ENCODE measurements at regions of chr6 and their contacts with region 1.

Region 1: DNA sequence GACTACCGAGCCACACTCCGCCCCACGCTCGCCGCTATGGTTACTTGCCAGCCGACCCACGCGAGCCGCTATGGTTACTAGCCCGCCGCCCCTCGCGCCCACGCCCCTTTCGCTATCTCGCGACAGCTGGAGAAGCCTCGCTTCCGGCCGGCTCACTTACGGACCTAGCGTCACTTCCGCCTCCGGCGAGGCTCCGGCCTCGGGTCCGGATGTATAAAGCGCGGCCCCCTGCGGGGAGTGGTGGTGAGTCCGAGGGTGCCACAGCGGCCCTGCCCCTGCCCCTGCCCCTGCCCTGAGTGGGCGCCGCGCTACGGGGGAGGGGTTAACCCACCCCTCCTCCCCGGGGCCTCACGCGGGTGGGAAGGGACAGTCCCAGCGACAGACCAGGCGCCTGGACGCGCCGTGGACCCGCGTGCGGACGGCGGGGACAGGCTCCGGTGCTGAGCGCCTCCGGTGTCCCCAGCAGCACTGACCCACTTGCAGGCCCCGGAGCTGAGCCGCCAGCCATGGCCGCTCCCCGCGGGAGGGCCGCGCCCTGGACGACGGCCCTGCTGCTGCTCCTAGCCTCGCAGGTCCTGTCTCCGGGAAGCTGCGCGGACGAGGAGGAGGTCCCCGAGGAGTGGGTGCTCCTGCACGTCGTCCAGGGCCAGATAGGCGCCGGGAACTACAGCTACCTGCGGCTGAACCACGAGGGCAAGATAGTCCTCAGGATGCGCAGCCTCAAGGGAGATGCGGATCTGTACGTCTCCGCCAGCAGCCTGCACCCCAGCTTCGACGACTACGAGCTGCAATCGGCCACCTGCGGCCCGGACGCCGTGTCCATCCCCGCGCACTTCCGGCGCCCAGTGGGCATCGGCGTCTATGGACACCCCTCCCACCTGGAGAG is at the starts of genes C6orf120 and WDR27:
- DNase-seq: peak; percentile 95
- ATAC-seq: peak; percentile 93
- H3K4me3 ChIP-seq: peak within 1 kb of the TSS; percentile 76
- H3K27ac ChIP-seq: peak within 1 kb of the TSS; percentile 89
- H3K4me1 ChIP-seq: peaks cover 9% of the 10 kb centered on the region
- H3K27me3 ChIP-seq: no peaks in the 10 kb centered on the region
- CTCF ChIP-seq: no peak
- POLR2A ChIP-seq: peak; percentile 86
- RAD21 ChIP-seq: no peak; the same call in 1 of the 2 replicates
- total RNA-seq, gene C6orf120: 26.7 and 44.2 TPM in 2 replicates
- total RNA-seq, gene WDR27: 7.0 and 7.8 TPM in 2 replicates

Region 2: GRCh38 chr6:169654598-169655391 is 47.4 kb before region 1 on chr6:
- CTCF ChIA-PET with region 1: no interaction called
- POLR2A ChIA-PET with region 1: no interaction called
- dilution Hi-C with region 1: no loop called
- in situ Hi-C with region 1: no loop called
- intact Hi-C with region 1: loop called (anchors 2 kb)
- DNase-seq: peak; percentile 61
- ATAC-seq: peak; percentile 93
- H3K4me3 ChIP-seq: peak overlapping the region; percentile 55
- H3K27ac ChIP-seq: peak overlapping the region; percentile 56
- H3K4me1 ChIP-seq: no peaks in the 10 kb centered on the region
- H3K27me3 ChIP-seq: no peaks in the 10 kb centered on the region
- CTCF ChIP-seq: peak; percentile 41; the same call in 1 of the 2 replicates
- POLR2A ChIP-seq: no peak; the same call in 1 of the 2 replicates
- RAD21 ChIP-seq: peak; percentile 56